ENCODE measurements at regions of chr17 and their contacts with region 1.

Region 1: DNA sequence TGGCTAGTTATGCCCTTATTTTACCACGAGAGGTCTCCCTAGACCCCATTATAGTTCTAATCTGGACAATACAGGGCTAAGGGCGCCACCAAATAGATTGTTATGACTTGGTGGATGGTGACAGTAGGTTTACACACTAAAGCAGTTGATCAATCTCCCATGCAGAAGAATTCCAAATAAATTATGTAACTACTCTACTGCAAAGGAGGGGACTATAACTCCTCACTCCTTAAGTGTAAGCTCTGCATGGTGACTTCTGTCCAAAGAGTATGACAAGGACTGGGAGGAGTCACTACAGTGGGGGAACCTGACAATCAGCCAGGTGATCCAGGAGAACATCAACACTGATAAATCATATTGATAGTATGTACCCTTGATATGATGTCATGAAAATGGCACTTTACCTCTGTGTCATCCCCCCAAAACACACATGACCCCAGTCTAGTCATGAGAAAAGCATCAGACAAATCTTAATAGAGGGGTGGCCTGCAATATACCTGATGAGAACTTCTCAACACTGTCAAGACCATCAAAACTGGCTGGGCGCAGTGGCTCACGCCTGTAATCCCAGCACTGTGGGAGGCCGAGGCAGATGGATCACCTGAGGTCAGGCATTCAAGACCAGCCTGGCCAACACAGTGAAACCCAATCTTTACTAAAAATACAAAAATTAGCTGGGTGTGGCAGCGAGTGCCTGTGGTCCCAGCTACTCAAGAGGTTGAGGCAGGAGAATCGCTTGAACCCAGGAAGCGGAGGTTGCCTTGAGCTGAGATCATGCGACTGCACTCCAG is 20.1 kb upstream of the YPEL2 start:
- DNase-seq: peak in 3 of 5 donors; percentile 51 to 64 (median 51)
- H3K4me3 ChIP-seq: no peak overlapping the region
- H3K4me3 Mint-ChIP-seq: no peak overlapping the region
- H3K27ac ChIP-seq: no peak overlapping the region
- H3K27ac Mint-ChIP-seq: no peak overlapping the region
- H3K4me1 ChIP-seq: no peaks in the 10 kb centered on the region
- H3K4me1 Mint-ChIP-seq: peaks cover 0 to 6% (median 0%) of the 10 kb centered on the region in 3 donors
- H3K27me3 ChIP-seq: no peaks in the 10 kb centered on the region
- H3K27me3 Mint-ChIP-seq: peaks cover 0 to under 1% of the 10 kb centered on the region in 2 donors

Region 2: DNA sequence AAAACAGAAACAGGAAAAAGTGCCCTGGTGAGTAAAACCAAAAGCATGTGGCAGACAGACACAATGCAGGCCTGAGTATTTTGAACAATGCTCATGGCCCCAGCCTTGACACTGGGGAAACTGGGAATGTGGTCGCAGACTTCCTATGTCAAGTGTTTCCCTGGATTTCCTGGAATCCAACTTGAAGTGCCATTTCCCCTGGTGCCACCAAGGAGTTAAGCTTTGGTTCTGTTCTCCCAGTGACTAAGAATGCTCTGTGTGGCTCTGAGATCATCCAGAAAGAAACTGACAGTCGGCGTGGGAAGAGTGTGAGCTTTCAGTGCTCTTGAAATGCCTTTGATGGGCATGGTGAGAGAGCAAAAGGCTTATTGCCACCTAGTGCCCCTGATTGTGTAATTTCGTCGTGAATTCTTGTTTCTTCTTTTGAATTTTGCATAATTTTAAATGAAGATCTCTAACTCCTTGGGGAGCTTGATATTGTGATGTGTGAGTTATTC is 116.1 kb after region 1 on chr17:
- CTCF ChIA-PET with region 1: interaction called, 10 read pairs
- POLR2A ChIA-PET with region 1: no interaction called
- DNase-seq: peak in 1 of 5 donors; percentile 16
- H3K4me3 ChIP-seq: no peak overlapping the region
- H3K4me3 Mint-ChIP-seq: no peak overlapping the region
- H3K27ac ChIP-seq: no peak overlapping the region
- H3K27ac Mint-ChIP-seq: peak overlapping the region in 1 of 8 donors; percentile 39
- H3K4me1 ChIP-seq: no peaks in the 10 kb centered on the region
- H3K4me1 Mint-ChIP-seq: peaks cover 0 to 4% (median 0%) of the 10 kb centered on the region in 3 donors
- H3K27me3 ChIP-seq: no peaks in the 10 kb centered on the region
- H3K27me3 Mint-ChIP-seq: peaks cover 0 to 3% of the 10 kb centered on the region in 2 donors

Region 3: DNA sequence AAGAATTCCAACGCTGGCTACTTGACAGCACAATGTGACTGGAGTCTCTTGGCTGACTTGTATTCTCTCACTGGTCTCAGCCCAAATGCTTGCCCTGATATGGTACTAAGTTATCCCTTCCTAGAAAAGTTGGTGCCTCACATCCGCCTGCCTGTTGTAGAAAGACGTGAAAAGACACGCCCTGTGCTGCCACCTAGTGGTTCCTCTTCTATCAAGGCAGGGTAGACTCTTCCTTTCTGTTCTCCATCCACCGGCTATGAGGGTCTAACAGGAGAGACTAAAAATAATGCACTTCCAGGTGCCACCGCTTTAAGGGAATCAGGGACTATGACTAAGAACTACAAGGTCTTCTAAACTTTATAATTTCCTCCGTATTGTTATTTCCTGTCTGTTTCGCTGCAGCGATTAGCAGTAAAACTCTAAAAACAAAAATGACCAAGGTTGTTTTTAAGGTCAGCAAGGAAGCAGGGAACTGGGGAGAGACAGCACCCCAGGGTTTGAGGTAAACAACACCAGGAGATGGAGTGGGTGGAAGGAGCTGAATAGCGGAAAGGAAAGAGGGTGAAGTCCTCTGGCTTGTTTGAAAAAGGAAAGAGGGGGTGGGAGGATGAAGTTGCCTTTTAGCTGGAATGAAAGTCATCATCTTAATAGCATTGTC is 129.6 kb after region 1 on chr17:
- CTCF ChIA-PET with region 1: interaction called, 175 read pairs
- POLR2A ChIA-PET with region 1: no interaction called
- DNase-seq: peak; percentile 71 to 86 (median 74)
- H3K4me3 ChIP-seq: no peak overlapping the region
- H3K4me3 Mint-ChIP-seq: peak overlapping the region in 4 of 7 donors; percentile 5 to 22 (median 10)
- H3K27ac ChIP-seq: no peak overlapping the region
- H3K27ac Mint-ChIP-seq: peak overlapping the region in 2 of 8 donors; percentile 1 to 22
- H3K4me1 ChIP-seq: peaks cover 19% of the 10 kb centered on the region
- H3K4me1 Mint-ChIP-seq: peaks cover 5 to 20% (median 17%) of the 10 kb centered on the region in 3 donors
- H3K27me3 ChIP-seq: no peaks in the 10 kb centered on the region
- H3K27me3 Mint-ChIP-seq: peaks cover 0 to 9% of the 10 kb centered on the region in 2 donors

Measured in CD8-positive, alpha-beta memory T cell (primary cell).